ENCODE measurements at regions of chr11 and their contacts with region 1.

Region 1: GRCh38 chr11:95699631-95700470 is 89.7 kb downstream of the FAM76B start:
- DNase-seq: peak; percentile 25
- ATAC-seq: peak; percentile 54
- H3K4me3 Mint-ChIP-seq: peak overlapping the region; percentile 55
- H3K27ac Mint-ChIP-seq: peak overlapping the region; percentile 95
- H3K4me1 Mint-ChIP-seq: peaks cover 58% of the 10 kb centered on the region
- H3K27me3 Mint-ChIP-seq: no peaks in the 10 kb centered on the region

Region 2: DNA sequence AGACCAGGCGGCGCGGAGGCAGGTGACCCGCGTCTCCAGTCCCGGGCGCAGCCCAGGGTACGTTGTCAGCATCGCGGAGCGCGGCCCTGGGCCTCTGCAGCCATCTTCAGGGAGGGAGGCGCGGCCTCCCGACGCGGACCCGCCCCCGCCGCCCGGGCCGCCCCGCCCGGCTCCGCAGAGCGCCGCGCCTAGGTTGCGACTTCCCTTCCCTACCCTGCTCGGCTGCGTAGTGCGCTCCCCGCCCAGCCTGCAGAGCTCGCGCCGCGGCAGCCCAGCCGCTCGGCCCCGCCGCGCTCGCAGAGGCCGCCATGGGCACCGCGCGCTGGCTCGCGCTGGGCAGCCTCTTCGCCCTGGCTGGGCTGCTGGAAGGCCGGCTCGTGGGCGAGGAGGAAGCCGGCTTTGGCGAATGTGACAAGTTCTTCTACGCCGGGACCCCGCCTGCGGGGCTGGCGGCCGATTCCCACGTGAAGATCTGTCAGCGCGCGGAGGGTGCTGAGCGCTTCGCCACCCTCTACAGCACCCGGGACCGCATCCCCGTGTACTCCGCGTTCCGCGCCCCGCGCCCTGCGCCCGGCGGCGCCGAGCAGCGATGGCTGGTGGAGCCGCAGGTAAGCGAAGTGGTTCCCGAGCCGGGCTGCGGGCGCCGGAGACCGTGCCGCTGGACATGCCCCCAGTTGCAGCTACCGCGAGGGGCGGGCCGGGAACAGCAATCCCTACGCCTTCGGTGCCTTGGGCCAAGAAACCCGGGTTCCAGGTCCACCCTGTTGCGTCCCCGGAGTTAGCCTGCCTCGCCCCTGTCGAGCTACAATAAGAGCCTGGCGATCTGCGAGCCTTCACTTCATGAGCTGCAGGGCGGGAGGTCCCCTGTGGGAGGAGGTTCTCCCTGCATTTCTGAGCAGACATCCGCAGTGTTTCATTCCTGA is 610.0 kb before region 1 on chr11 and contains the start of gene ENDOD1:
- CTCF ChIA-PET with region 1: interaction called, 3 read pairs
- POLR2A ChIA-PET with region 1: no interaction called
- intact Hi-C with region 1: loop called in 1 of 2 experiments (anchors 5 kb)
- DNase-seq: peak; percentile 91
- ATAC-seq: peak; percentile 91
- H3K4me3 Mint-ChIP-seq: peak within 1 kb of the TSS; percentile 84
- H3K27ac Mint-ChIP-seq: peak within 1 kb of the TSS; percentile 96
- H3K4me1 Mint-ChIP-seq: peaks cover 61% of the 10 kb centered on the region
- H3K27me3 Mint-ChIP-seq: no peaks in the 10 kb centered on the region
- total RNA-seq, gene ENDOD1: 11.1 to 13.1 TPM

Region 3: DNA sequence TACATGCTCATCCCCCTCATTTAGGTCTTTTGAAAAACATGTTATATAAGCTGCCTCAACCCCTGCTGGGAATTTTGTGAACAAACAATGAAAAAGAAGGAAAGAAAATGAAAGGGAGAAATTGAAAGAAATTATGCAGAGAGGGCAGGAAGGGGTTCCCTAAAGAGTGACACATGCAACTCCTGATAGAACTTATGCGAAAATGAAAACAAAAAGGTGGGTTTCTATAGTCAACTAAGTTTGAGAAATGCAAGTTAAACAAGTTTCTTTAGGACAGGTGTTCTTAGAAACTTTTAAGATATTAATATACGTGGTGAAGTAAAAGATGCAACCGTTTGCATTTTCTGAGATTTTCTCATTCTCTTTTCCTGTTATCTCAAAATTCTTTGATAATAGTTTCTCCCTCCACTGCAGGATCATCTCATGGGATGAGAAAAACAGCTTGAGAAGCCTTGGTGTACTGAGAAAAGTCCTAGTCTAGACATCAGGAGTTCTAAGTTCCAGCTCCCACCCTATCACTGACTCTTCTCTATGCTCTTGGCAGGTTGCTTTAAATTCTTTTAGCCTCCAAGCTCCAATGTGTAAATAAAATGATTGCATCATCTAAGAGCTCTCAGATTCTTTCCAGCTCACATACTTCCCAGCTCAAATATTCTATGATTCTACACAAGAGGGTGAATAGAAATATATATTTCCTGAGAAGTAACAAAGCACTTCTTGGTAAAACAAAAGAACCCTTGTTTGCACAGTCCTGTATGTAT is 19.5 kb before region 1 on chr11:
- CTCF ChIA-PET with region 1: interaction called, 10 read pairs
- POLR2A ChIA-PET with region 1: no interaction called
- intact Hi-C with region 1: loop called (anchors 2 kb)
- DNase-seq: no peak
- ATAC-seq: peak; percentile 28
- H3K4me3 Mint-ChIP-seq: no peak overlapping the region
- H3K27ac Mint-ChIP-seq: peak overlapping the region; percentile 35
- H3K4me1 Mint-ChIP-seq: peaks cover 81% of the 10 kb centered on the region
- H3K27me3 Mint-ChIP-seq: no peaks in the 10 kb centered on the region

Region 4: GRCh38 chr11:95688580-95689189 is 11.2 kb before region 1 on chr11:
- CTCF ChIA-PET with region 1: interaction called, 41 read pairs
- POLR2A ChIA-PET with region 1: no interaction called
- intact Hi-C with region 1: loop called (anchors 1 kb)
- DNase-seq: no peak
- ATAC-seq: peak; percentile 77
- H3K4me3 Mint-ChIP-seq: peak overlapping the region; percentile 9
- H3K27ac Mint-ChIP-seq: no peak overlapping the region
- H3K4me1 Mint-ChIP-seq: peaks cover 24% of the 10 kb centered on the region
- H3K27me3 Mint-ChIP-seq: no peaks in the 10 kb centered on the region

Region 5: GRCh38 chr11:95715777-95716241 is 16.0 kb after region 1 on chr11:
- CTCF ChIA-PET with region 1: interaction called, 25 read pairs
- POLR2A ChIA-PET with region 1: no interaction called
- intact Hi-C with region 1: loop called in 1 of 2 experiments (anchors 2 kb)
- DNase-seq: peak; percentile 71
- ATAC-seq: peak; percentile 76
- H3K4me3 Mint-ChIP-seq: no peak overlapping the region
- H3K27ac Mint-ChIP-seq: peak overlapping the region; percentile 69
- H3K4me1 Mint-ChIP-seq: peaks cover 50% of the 10 kb centered on the region
- H3K27me3 Mint-ChIP-seq: no peaks in the 10 kb centered on the region

Region 6: GRCh38 chr11:95863486-95864140 is 163.8 kb after region 1 on chr11:
- CTCF ChIA-PET with region 1: no interaction called
- POLR2A ChIA-PET with region 1: no interaction called
- intact Hi-C with region 1: no loop called
- DNase-seq: no peak
- ATAC-seq: no peak
- H3K4me3 Mint-ChIP-seq: no peak overlapping the region
- H3K27ac Mint-ChIP-seq: no peak overlapping the region
- H3K4me1 Mint-ChIP-seq: no peaks in the 10 kb centered on the region
- H3K27me3 Mint-ChIP-seq: no peaks in the 10 kb centered on the region

Measured in activated CD4-positive, alpha-beta T cell treated with anti-CD3 and anti-CD28 coated beads for 36 hours (primary cell).